PC-9 (cell line): ENCODE measurements at regions of chr13 and their contacts with region 1.

Region 1: DNA sequence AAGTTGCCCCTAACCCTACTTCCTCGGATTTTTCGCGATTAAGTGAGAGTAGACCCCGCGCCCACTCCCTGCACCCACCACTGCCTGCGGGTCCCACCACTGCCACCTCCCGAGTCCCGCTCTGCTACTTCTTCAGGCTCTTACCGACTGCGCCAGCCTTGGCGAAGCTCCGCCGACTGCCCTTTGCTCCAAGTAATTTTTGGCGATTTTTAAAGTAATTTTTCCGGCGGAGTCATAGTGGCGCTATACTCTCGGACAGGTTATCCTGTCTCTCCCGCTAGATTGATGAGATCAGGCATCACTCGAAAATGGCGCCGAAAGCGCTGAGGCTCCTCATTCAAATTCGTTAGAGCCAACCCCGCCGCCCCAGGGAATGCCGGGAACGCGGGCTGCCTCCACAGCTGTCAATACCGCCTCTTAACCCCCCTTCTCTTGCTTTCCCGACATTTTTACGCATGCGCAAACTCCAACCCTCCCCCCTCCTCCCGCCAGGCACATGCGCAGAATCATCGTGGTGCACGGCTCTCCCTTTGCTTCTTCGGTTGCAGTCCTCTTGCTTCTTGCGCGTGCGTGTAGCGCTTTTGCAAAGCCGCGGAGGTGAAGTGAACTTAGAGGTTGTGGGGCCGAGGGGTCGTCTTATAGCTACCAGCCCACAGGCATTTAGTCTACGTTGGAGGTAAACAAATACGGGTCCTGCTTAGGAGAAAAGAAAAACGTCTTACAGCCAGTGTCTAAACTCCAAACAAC is 66.6 kb downstream of the KCNRG start:
- DNase-seq: peak; percentile 95 to 98
- H3K4me3 ChIP-seq: peak overlapping the region; percentile 87
- H3K27ac ChIP-seq: peak overlapping the region; percentile 76
- H3K4me1 ChIP-seq: peaks cover 46% of the 10 kb centered on the region
- H3K27me3 ChIP-seq: no peaks in the 10 kb centered on the region
- CTCF ChIP-seq: no peak

Region 2: GRCh38 chr13:49840266-49840665 is 241.6 kb before region 1 on chr13:
- CTCF ChIA-PET with region 1: no interaction called
- POLR2A ChIA-PET with region 1: no interaction called
- intact Hi-C with region 1: loop called (anchors 5 kb)
- DNase-seq: no peak
- H3K4me3 ChIP-seq: no peak overlapping the region
- H3K27ac ChIP-seq: no peak overlapping the region
- H3K4me1 ChIP-seq: no peaks in the 10 kb centered on the region
- H3K27me3 ChIP-seq: no peaks in the 10 kb centered on the region
- CTCF ChIP-seq: no peak

Region 3: GRCh38 chr13:50107205-50107604 is 25.4 kb after region 1 on chr13:
- CTCF ChIA-PET with region 1: interaction called, 4 read pairs
- POLR2A ChIA-PET with region 1: no interaction called
- intact Hi-C with region 1: loop called (anchors 1 kb)
- DNase-seq: no peak
- H3K4me3 ChIP-seq: no peak overlapping the region
- H3K27ac ChIP-seq: no peak overlapping the region
- H3K4me1 ChIP-seq: peaks cover 20% of the 10 kb centered on the region
- H3K27me3 ChIP-seq: no peaks in the 10 kb centered on the region
- CTCF ChIP-seq: no peak

Region 4: DNA sequence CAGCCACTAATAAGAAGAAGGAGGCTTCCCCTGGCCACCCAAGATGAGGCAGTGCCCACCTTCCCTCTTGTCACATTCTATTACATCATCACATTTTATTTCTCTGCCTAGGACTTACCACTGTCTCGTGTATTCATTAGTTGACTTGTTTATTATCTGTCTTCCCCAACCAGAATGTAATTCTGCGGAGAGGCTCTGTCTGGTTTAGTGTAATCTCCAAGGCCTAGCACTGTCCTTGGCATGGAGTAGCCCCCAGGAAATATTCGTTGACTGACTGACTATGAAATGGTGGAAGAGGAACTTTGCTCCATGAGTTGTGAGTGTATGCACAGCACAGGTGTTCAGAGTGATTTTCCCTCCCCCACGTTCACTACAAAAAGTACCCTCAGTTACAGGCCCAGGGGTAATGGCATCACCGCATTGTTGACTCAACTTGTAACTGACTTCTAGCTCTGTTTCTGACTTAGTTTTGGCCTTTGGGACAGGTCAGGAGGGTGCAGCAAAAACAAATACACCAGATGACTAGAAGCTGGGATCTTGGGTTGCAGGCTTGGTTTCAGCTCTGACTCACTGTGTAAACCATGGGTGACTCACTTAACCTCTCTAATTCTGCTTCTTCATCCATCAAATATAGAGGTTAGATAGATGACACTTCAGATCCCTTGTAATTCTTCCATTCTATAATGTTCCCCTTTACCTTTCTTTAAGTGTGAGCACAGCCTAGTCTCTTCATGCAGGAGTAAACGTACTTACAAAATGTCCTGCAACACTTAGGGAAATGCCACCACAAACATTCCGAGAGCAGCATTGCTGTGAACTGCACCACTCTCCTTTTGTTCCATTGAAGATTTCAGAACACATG is 163.1 kb after region 1 on chr13:
- CTCF ChIA-PET with region 1: no interaction called
- POLR2A ChIA-PET with region 1: no interaction called
- intact Hi-C with region 1: loop called (anchors 5 kb)
- DNase-seq: peak; percentile 72 to 97
- H3K4me3 ChIP-seq: no peak overlapping the region
- H3K27ac ChIP-seq: peak overlapping the region; percentile 67
- H3K4me1 ChIP-seq: peaks cover 23% of the 10 kb centered on the region
- H3K27me3 ChIP-seq: no peaks in the 10 kb centered on the region
- CTCF ChIP-seq: no peak

Region 5: GRCh38 chr13:50357586-50358118 is 275.8 kb after region 1 on chr13:
- CTCF ChIA-PET with region 1: no interaction called
- POLR2A ChIA-PET with region 1: interaction called, 3 read pairs
- intact Hi-C with region 1: loop called (anchors 5 kb)
- DNase-seq: peak; percentile 67 to 96
- H3K4me3 ChIP-seq: peak overlapping the region; percentile 22; the same call in 1 of the 2 replicates
- H3K27ac ChIP-seq: peak overlapping the region; percentile 79
- H3K4me1 ChIP-seq: peaks cover 27% of the 10 kb centered on the region
- H3K27me3 ChIP-seq: no peaks in the 10 kb centered on the region
- CTCF ChIP-seq: no peak

Region 6: GRCh38 chr13:50676602-50677001 is 594.8 kb after region 1 on chr13:
- CTCF ChIA-PET with region 1: no interaction called
- POLR2A ChIA-PET with region 1: no interaction called
- intact Hi-C with region 1: loop called (anchors 5 kb)
- DNase-seq: peak; percentile 57 to 95
- H3K4me3 ChIP-seq: no peak overlapping the region
- H3K27ac ChIP-seq: peak overlapping the region; percentile 90
- H3K4me1 ChIP-seq: peaks cover 77% of the 10 kb centered on the region
- H3K27me3 ChIP-seq: no peaks in the 10 kb centered on the region
- CTCF ChIP-seq: no peak

Region 7: DNA sequence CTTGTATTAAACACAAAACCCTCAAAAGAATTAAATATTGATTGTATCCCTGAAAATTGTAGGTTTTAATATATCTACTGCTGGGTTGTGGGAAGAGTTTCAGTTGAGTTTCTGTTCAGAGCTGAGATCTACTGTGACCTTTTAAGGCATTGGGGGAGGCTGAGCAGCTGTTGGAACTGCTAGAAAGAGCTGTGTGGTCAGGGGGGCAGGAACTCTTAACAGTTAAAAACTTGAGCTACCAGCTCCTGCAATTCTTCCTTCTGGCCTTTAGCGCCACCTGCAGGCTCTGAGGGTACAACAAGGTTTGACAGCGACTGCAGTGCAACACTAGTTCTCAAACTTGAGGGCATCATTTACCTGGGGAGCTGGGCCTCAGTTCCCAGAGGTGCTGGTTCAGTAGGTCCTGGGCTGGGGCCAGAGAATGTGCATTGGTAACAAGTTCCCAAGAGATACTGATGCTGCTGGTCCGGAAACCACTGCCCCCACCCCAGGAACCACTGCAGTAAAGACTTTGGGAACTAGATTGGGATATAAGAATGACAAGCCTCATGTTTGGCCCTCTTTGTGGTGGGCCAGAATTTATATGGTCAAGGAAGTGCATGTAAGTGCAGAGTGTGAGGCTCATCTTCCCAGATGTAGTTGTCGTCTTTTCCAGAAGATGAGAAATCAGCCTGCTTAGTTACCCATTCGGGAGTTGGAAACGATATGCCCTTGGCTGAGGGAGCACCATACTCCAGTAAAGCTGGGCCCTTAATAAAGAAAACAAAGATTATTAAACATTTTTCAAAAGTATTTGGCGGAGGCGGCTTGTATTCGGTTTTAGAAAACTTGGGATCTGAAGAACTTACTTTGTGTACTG is 830.3 kb after region 1 on chr13:
- CTCF ChIA-PET with region 1: interaction called, 3 read pairs
- POLR2A ChIA-PET with region 1: interaction called, 21 read pairs
- intact Hi-C with region 1: loop called (anchors 2 kb)
- DNase-seq: peak; percentile 64 to 75
- H3K4me3 ChIP-seq: peak overlapping the region; percentile 96; the same call in 1 of the 2 replicates
- H3K27ac ChIP-seq: no peak overlapping the region
- H3K4me1 ChIP-seq: peaks cover 17% of the 10 kb centered on the region
- H3K27me3 ChIP-seq: no peaks in the 10 kb centered on the region
- CTCF ChIP-seq: peak; percentile 92